Naive thymus-derived CD4-positive, alpha-beta T cell (primary cell): ENCODE measurements at regions of chr16 and their contacts with region 1.

Region 1: DNA sequence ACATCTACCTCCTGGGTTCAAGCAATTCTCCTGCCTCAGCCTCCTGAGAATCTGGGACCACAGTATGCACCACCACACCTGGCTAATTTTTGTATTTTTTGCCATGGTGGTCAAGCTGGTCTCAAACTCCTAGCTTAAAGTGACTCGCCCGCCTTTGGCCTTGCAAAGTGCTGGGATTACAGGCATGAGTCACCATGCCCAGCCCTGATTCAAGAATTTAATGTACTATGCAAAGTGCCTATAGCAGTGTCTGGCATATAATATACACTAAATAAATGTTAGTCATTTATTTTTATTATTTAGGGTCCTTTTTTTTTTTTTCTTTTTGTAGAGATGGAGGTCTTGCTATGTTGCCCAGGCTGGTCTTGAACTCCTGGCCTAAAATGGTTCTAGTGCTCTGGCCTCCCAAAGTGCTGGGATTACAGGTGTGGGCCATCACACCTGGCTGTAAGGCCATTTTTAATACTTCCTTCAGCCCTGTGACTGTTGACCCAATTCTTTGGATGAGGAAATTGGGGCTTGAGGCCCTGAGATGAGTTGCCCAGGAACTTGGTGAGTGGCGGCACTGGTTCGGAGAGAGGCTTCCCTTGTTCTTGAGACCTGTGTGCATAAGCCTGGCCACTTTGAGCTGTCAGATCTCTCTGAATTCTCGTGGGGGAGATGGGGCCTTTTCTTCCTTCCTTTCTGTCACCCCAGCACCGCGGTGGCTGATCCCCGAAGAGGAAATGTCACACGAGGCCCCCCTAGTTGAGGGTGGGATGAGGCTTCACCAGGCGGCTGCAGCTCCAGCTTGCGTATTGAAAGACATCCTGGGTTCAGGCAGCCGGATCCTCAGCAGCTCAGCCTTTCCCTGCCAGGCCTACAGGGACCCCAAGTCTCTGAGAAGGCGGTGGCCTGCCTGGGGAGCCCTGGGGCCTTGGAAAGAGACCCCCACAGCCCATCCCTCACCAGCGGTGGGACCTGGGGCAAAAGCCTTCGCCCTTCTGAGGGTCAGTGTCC is 38.7 kb downstream of the LAT start:
- DNase-seq: peak in 3 of 9 donors; percentile 20 to 31 (median 25)
- ATAC-seq: peak; percentile 36
- H3K4me3 ChIP-seq: no peak overlapping the region
- H3K4me3 Mint-ChIP-seq: peak overlapping the region in 9 of 10 donors; percentile 21 to 80 (median 69)
- H3K27ac ChIP-seq: peak overlapping the region; percentile 68
- H3K27ac Mint-ChIP-seq: peak overlapping the region; percentile 63 to 96 (median 93)
- H3K4me1 ChIP-seq: peaks cover 17 to 46% of the 10 kb centered on the region in 2 donors
- H3K4me1 Mint-ChIP-seq: peaks cover 36 to 74% (median 55%) of the 10 kb centered on the region in 7 donors
- H3K27me3 ChIP-seq: no peaks in the 10 kb centered on the region
- H3K27me3 Mint-ChIP-seq: no peaks in the 10 kb centered on the region

Region 2: GRCh38 chr16:28538733-28539596 is 484.6 kb before region 1 on chr16 and contains the start of gene NUPR1:
- CTCF ChIA-PET with region 1: no interaction called
- POLR2A ChIA-PET with region 1: no interaction called
- intact Hi-C with region 1: no loop called
- DNase-seq: no peak
- ATAC-seq: no peak
- H3K4me3 ChIP-seq: no peak within 1 kb of the TSS
- H3K4me3 Mint-ChIP-seq: peak within 1 kb of the TSS in 1 of 10 donors; percentile 2
- H3K27ac ChIP-seq: no peak within 1 kb of the TSS
- H3K27ac Mint-ChIP-seq: peak within 1 kb of the TSS; percentile 5 to 87 (median 76)
- H3K4me1 ChIP-seq: peaks cover 17 to 18% of the 10 kb centered on the region in 2 donors
- H3K4me1 Mint-ChIP-seq: peaks cover 18 to 65% (median 40%) of the 10 kb centered on the region in 7 donors
- H3K27me3 ChIP-seq: no peaks in the 10 kb centered on the region
- H3K27me3 Mint-ChIP-seq: no peaks in the 10 kb centered on the region
- total RNA-seq, gene NUPR1: 0.05 to 0.11 TPM in 2 of 5 experiments, not detected in the others

Region 3: DNA sequence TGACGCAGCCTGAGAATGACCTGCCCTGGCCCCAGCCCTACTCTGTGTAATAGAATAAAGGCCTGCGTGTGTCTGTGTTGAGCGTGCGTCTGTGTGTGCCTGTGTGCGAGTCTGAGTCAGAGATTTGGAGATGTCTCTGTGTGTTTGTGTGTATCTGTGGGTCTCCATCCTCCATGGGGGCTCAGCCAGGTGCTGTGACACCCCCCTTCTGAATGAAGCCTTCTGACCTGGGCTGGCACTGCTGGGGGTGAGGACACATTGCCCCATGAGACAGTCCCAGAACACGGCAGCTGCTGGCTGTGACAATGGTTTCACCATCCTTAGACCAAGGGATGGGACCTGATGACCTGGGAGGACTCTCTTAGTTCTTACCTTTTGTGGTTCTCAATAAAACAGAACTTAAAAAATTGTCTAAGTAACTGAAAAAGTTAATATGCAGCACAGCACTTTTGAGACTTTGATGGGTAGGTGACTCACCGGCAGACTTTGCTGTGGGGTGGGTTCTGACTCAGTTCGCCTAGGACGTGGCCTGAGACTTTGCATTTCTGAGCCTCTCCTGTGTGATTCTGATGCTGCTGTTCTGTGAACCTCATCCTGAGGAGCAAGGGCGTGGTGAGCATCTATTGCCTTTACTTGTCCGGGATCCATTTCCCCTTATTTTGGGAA is 33.1 kb before region 1 on chr16:
- CTCF ChIA-PET with region 1: interaction called, 10 read pairs
- POLR2A ChIA-PET with region 1: interaction called, 140 read pairs
- intact Hi-C with region 1: no loop called
- DNase-seq: peak in 2 of 9 donors; percentile 53 to 65
- ATAC-seq: peak; percentile 32
- H3K4me3 ChIP-seq: peak overlapping the region; percentile 27
- H3K4me3 Mint-ChIP-seq: peak overlapping the region; percentile 78 to 100 (median 97)
- H3K27ac ChIP-seq: peak overlapping the region; percentile 87
- H3K27ac Mint-ChIP-seq: peak overlapping the region; percentile 89 to 99 (median 96)
- H3K4me1 ChIP-seq: peaks cover 33 to 46% of the 10 kb centered on the region in 2 donors
- H3K4me1 Mint-ChIP-seq: peaks cover 34 to 76% (median 47%) of the 10 kb centered on the region in 7 donors
- H3K27me3 ChIP-seq: no peaks in the 10 kb centered on the region
- H3K27me3 Mint-ChIP-seq: no peaks in the 10 kb centered on the region

Region 4: GRCh38 chr16:29007730-29008593 is 15.6 kb before region 1 on chr16:
- CTCF ChIA-PET with region 1: interaction called, 9 read pairs
- POLR2A ChIA-PET with region 1: interaction called, 45 read pairs
- intact Hi-C with region 1: loop called in 1 of 2 experiments (anchors 1 kb)
- DNase-seq: peak in 8 of 9 donors; percentile 54 to 77 (median 68)
- ATAC-seq: peak; percentile 80
- H3K4me3 ChIP-seq: no peak overlapping the region
- H3K4me3 Mint-ChIP-seq: peak overlapping the region; percentile 64 to 88 (median 83)
- H3K27ac ChIP-seq: peak overlapping the region; percentile 74
- H3K27ac Mint-ChIP-seq: peak overlapping the region; percentile 92 to 99 (median 96)
- H3K4me1 ChIP-seq: peaks cover 38 to 52% of the 10 kb centered on the region in 2 donors
- H3K4me1 Mint-ChIP-seq: peaks cover 33 to 73% (median 52%) of the 10 kb centered on the region in 7 donors
- H3K27me3 ChIP-seq: no peaks in the 10 kb centered on the region
- H3K27me3 Mint-ChIP-seq: no peaks in the 10 kb centered on the region

Region 5: GRCh38 chr16:29012913-29013553 is 10.5 kb before region 1 on chr16:
- CTCF ChIA-PET with region 1: interaction called, 9 read pairs
- POLR2A ChIA-PET with region 1: interaction called, 45 read pairs
- intact Hi-C with region 1: loop called in 1 of 2 experiments (anchors 1 kb)
- DNase-seq: peak in 7 of 9 donors; percentile 65 to 88 (median 77)
- ATAC-seq: peak; percentile 87
- H3K4me3 ChIP-seq: no peak overlapping the region
- H3K4me3 Mint-ChIP-seq: peak overlapping the region; percentile 51 to 81 (median 62)
- H3K27ac ChIP-seq: peak overlapping the region; percentile 71
- H3K27ac Mint-ChIP-seq: peak overlapping the region; percentile 89 to 99 (median 97)
- H3K4me1 ChIP-seq: peaks cover 30 to 58% of the 10 kb centered on the region in 2 donors
- H3K4me1 Mint-ChIP-seq: peaks cover 38 to 82% (median 48%) of the 10 kb centered on the region in 7 donors
- H3K27me3 ChIP-seq: no peaks in the 10 kb centered on the region
- H3K27me3 Mint-ChIP-seq: no peaks in the 10 kb centered on the region

Region 6: GRCh38 chr16:29148867-29149272 is 125.3 kb after region 1 on chr16:
- CTCF ChIA-PET with region 1: no interaction called
- POLR2A ChIA-PET with region 1: no interaction called
- intact Hi-C with region 1: no loop called
- DNase-seq: peak; percentile 49 to 94 (median 92)
- ATAC-seq: peak; percentile 96
- H3K4me3 ChIP-seq: peak overlapping the region; percentile 13
- H3K4me3 Mint-ChIP-seq: peak overlapping the region; percentile 56 to 85 (median 74)
- H3K27ac ChIP-seq: peak overlapping the region; percentile 80
- H3K27ac Mint-ChIP-seq: peak overlapping the region; percentile 88 to 100 (median 98)
- H3K4me1 ChIP-seq: peaks cover 22 to 34% of the 10 kb centered on the region in 2 donors
- H3K4me1 Mint-ChIP-seq: peaks cover 25 to 73% (median 46%) of the 10 kb centered on the region in 7 donors
- H3K27me3 ChIP-seq: no peaks in the 10 kb centered on the region
- H3K27me3 Mint-ChIP-seq: no peaks in the 10 kb centered on the region